ENCODE measurements at regions of chr6 and their contacts with region 1.

Region 1: GRCh38 chr6:100664274-100665040 is 199.7 kb upstream of the SIM1 start:
- DNase-seq: no peak
- ATAC-seq: no peak
- H3K4me3 Mint-ChIP-seq: no peak overlapping the region
- H3K27ac Mint-ChIP-seq: no peak overlapping the region
- H3K4me1 Mint-ChIP-seq: peaks cover 11% of the 10 kb centered on the region
- H3K27me3 Mint-ChIP-seq: no peaks in the 10 kb centered on the region

Region 2: DNA sequence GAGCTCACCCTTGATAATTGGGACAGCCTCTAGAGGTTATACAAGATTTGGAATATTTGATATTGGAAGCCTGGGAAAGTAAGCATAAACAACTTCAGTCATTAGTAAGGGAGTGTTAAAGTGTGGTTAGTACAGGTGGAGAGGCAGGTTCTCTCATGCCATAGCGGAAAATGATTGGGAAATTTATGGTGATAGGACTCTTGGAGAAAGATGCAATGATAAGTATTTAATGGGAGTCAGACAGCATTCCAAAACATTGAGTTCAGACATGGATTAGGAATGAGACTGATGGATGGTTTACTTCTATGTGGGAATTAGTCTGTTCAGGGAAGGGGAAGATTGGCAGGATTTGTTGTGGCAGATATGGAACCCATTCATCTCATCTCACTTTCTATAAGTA is 823.2 kb before region 1 on chr6:
- CTCF ChIA-PET with region 1: no interaction called
- POLR2A ChIA-PET with region 1: no interaction called
- intact Hi-C with region 1: no loop called
- DNase-seq: no peak
- ATAC-seq: no peak
- H3K4me3 Mint-ChIP-seq: no peak overlapping the region
- H3K27ac Mint-ChIP-seq: no peak overlapping the region
- H3K4me1 Mint-ChIP-seq: no peaks in the 10 kb centered on the region
- H3K27me3 Mint-ChIP-seq: peaks cover 12% of the 10 kb centered on the region

Region 3: DNA sequence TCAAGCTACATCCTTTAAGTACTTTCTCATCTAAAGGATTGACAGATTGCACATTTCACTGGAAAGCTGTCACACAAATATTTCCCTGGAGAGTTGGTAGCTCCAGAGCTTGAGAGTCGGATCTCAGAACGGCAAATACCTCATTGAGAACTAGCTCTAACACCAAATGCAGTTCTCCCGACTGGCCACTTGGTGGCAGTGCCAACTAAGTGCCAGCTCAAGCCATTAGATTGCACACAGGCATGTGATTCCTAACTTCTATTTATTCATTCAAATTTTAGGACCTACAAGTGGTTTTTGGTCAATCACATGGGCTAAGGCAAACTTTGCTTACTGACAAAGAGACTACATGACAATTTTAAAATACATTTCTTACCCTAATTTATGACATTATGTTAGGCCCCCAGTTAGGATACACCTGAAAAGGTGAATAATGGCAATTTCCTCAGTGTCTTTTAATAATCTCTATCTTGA is 662.5 kb before region 1 on chr6:
- CTCF ChIA-PET with region 1: interaction called, 7 read pairs
- POLR2A ChIA-PET with region 1: no interaction called
- intact Hi-C with region 1: loop called in 1 of 2 experiments (anchors 5 kb)
- DNase-seq: peak; percentile 55
- ATAC-seq: peak; percentile 61
- H3K4me3 Mint-ChIP-seq: no peak overlapping the region
- H3K27ac Mint-ChIP-seq: no peak overlapping the region
- H3K4me1 Mint-ChIP-seq: no peaks in the 10 kb centered on the region
- H3K27me3 Mint-ChIP-seq: peaks cover 15% of the 10 kb centered on the region

Region 4: GRCh38 chr6:100116411-100117194 is 547.9 kb before region 1 on chr6:
- CTCF ChIA-PET with region 1: interaction called, 3 read pairs
- POLR2A ChIA-PET with region 1: no interaction called
- intact Hi-C with region 1: loop called (anchors 2 to 5 kb)
- DNase-seq: peak; percentile 45
- ATAC-seq: no peak
- H3K4me3 Mint-ChIP-seq: no peak overlapping the region
- H3K27ac Mint-ChIP-seq: no peak overlapping the region
- H3K4me1 Mint-ChIP-seq: no peaks in the 10 kb centered on the region
- H3K27me3 Mint-ChIP-seq: peaks cover 6% of the 10 kb centered on the region

Region 5: DNA sequence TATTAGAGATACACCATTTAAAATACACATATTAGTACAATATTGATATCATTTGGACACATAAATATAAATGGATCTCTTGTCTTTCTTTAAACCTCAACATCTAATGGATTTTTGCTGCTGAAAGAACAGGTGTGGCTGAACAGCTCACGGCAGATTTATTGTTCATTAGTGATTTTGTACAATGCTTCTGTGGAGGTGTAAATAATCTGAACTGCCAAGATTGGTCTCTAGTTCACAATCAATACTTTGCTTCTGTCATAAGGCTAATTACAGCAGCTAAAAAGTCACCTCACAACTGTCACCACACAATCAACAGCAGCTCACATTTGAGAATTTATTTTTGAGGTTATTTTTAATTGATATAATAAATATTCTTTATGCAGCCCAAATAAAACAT is 37.7 kb before region 1 on chr6:
- CTCF ChIA-PET with region 1: interaction called, 10 read pairs
- POLR2A ChIA-PET with region 1: no interaction called
- intact Hi-C with region 1: no loop called
- DNase-seq: no peak
- ATAC-seq: no peak
- H3K4me3 Mint-ChIP-seq: no peak overlapping the region
- H3K27ac Mint-ChIP-seq: no peak overlapping the region
- H3K4me1 Mint-ChIP-seq: no peaks in the 10 kb centered on the region
- H3K27me3 Mint-ChIP-seq: no peaks in the 10 kb centered on the region

Region 6: GRCh38 chr6:100685747-100686146 is 21.3 kb after region 1 on chr6:
- CTCF ChIA-PET with region 1: no interaction called
- POLR2A ChIA-PET with region 1: no interaction called
- intact Hi-C with region 1: no loop called
- DNase-seq: no peak
- ATAC-seq: no peak
- H3K4me3 Mint-ChIP-seq: no peak overlapping the region
- H3K27ac Mint-ChIP-seq: no peak overlapping the region
- H3K4me1 Mint-ChIP-seq: no peaks in the 10 kb centered on the region
- H3K27me3 Mint-ChIP-seq: no peaks in the 10 kb centered on the region

Region 7: DNA sequence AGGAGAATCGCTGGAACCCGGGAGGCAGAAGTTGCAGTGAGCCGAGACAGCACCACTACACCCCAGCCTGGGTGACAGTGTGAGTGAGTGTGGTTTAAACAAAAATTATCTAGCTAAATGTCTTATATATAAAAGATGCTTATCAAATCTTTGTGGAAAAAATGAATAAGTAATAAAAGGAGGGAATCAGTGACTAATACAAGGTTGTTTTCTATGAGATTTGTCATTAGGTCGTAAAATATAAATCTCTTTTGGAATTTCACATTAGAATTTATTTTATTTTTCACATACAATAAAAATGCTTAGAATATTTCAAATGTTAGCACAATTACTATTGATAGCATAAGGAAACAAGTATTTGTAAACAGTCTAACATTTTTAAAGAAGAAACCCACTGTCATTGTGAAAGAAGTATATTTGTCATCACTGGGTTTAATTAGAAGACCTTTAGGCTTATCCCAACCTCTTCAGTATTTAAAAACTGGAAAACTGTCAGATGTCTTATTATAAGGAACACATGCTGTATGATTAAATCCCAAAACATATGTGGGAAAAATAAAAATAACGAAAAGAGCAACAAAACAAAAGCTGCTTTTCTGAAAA is 169.6 kb after region 1 on chr6:
- CTCF ChIA-PET with region 1: no interaction called
- POLR2A ChIA-PET with region 1: no interaction called
- intact Hi-C with region 1: no loop called
- DNase-seq: no peak
- ATAC-seq: no peak
- H3K4me3 Mint-ChIP-seq: no peak overlapping the region
- H3K27ac Mint-ChIP-seq: no peak overlapping the region
- H3K4me1 Mint-ChIP-seq: peaks cover 12% of the 10 kb centered on the region
- H3K27me3 Mint-ChIP-seq: no peaks in the 10 kb centered on the region

Measured in activated CD4-positive, alpha-beta T cell treated with anti-CD3 and anti-CD28 coated beads for 36 hours (primary cell).